ENCODE measurements at regions of chr5 and their contacts with region 1.

Region 1: GRCh38 chr5:121630402-121630801 is 221.3 kb upstream of the FTMT start:
- DNase-seq: no peak
- ATAC-seq: no peak

Region 2: DNA sequence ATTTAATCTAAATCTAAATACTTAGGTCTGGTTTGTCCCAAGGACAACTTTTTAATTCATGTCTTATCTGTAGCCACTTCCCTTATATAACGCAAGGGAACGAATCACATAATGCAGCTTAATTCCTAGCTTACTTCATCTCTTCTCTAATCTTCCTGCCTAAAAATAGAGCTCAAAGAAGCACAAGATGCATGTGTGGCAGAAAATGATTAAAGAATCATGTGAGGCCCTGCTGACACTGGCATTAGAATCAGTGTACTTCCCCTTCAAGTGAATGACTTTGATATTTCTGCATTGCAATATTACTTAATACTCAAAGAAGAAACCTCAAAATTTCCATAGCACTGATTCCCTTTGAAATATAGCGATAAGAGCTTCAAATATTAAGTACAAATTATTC is 96.6 kb before region 1 on chr5:
- intact Hi-C with region 1: no loop called
- DNase-seq: no peak
- ATAC-seq: peak; percentile 46

Region 3: DNA sequence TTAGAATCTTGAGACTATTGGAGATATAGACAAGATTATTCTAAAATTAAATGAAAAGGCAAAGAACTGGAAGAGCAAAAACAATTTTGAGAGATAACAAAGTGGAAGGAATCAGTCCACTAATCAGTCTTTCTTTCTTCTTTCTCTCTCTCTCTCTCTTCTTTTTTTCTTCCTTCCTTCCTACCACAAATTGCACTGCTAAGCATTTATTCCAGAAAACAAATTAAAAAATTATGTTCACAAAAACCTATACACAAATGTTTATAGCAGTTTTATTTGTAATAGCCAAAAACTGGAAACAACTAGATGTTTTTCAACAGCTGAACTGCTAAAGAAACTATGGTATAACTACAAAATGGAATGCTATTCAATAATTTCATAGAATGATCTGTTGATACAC is 70.6 kb before region 1 on chr5:
- intact Hi-C with region 1: no loop called
- DNase-seq: no peak
- ATAC-seq: no peak

Region 4: GRCh38 chr5:121862801-121863200 is 232.4 kb after region 1 on chr5:
- intact Hi-C with region 1: loop called (anchors 5 kb)
- DNase-seq: no peak
- ATAC-seq: no peak

Region 5: GRCh38 chr5:121949867-121950266 is 319.5 kb after region 1 on chr5:
- intact Hi-C with region 1: loop called (anchors 5 kb)
- DNase-seq: no peak
- ATAC-seq: no peak

Measured in Right ventricle myocardium inferior (tissue), 1 donor.